AG04450 (cell line): ENCODE measurements at regions of chr7 and their contacts with region 1.

Region 1: DNA sequence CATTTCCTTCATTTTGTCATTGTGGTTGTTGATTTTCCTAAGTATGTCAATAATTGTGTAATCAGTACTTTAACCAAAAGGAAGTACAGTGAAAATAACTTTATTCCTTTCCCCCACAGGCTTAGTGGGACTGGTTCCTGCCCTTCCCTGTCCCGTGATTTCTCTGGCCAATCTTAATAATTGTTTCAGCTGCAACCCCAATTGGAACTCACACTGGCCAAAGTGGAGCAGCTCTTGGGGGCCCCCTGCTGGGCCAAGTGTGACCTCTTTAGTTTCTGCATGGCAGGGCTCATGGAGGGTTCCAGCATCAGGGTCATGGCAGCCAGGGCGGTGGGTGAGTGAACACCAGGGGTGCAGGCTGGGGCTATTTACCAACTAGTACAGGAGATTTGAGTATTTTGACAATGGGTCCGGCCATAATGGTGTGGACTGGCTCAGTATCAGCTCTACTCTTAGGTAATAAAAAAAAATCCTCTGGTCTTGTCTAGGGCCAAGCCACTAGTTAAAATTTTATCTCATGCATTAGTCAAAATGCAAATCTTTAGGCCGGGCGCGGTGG is 31.7 kb downstream of the CYCS start:
- DNase-seq: peak; percentile 30
- H3K4me3 ChIP-seq: no peak overlapping the region
- H3K27ac ChIP-seq: no peak overlapping the region
- H3K27me3 ChIP-seq: no peaks in the 10 kb centered on the region
- CTCF ChIP-seq: peak; percentile 92

Region 2: GRCh38 chr7:24757353-24758275 is 335.7 kb before region 1 on chr7 and contains the start of gene GSDME:
- CTCF ChIA-PET with region 1: interaction called, 19 read pairs
- POLR2A ChIA-PET with region 1: interaction called, 3 read pairs
- DNase-seq: peak; percentile 15
- H3K4me3 ChIP-seq: peak within 1 kb of the TSS; percentile 78
- H3K27ac ChIP-seq: peak within 1 kb of the TSS; percentile 90
- H3K27me3 ChIP-seq: no peaks in the 10 kb centered on the region
- CTCF ChIP-seq: no peak
- polyA plus RNA-seq, gene GSDME: 58.3 and 63.8 TPM in 2 replicates

Region 3: DNA sequence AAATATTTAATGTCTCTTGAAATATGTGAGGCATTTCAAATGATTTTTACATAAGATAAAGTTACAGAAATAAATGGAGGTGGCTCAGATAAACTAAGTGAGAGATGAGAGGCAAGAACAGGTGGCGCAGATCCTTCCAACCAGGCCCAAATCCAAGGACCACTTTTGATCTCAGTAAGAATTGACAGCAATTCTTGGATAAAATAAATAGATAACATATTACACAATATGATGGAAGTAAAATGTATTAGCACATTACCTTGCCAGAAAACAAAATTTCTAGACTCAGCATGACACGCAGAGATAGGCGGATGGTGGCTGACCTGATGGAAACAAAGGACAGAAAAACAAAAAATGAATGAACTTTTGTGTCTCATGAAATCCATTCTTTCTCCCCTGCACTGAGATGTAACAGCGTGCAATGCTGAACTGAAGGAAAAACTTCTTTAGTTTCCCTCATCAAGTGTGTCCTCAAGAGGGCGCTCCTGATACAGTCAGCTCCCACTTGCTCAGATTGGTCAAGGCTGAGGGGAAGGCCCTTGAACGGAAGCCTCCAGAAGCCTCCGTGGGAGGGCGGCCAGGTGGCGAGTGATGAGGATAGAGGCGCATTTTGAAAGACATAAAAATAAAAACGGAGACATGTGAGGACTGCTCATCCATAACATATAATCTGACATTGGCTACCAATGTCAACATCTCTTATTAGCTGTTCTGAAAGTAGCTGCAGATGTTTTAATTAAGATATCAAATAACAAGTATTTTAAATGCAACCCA is 273.2 kb before region 1 on chr7:
- CTCF ChIA-PET with region 1: interaction called, 328 read pairs
- POLR2A ChIA-PET with region 1: interaction called, 3 read pairs
- DNase-seq: peak; percentile 75
- H3K4me3 ChIP-seq: no peak overlapping the region
- H3K27ac ChIP-seq: peak overlapping the region; percentile 35
- H3K27me3 ChIP-seq: no peaks in the 10 kb centered on the region
- CTCF ChIP-seq: peak; percentile 94

Region 4: GRCh38 chr7:24926623-24927524 is 166.5 kb before region 1 on chr7:
- CTCF ChIA-PET with region 1: interaction called, 11 read pairs
- POLR2A ChIA-PET with region 1: no interaction called
- DNase-seq: peak; percentile 53
- H3K4me3 ChIP-seq: no peak overlapping the region
- H3K27ac ChIP-seq: no peak overlapping the region
- H3K27me3 ChIP-seq: no peaks in the 10 kb centered on the region
- CTCF ChIP-seq: no peak

Region 5: DNA sequence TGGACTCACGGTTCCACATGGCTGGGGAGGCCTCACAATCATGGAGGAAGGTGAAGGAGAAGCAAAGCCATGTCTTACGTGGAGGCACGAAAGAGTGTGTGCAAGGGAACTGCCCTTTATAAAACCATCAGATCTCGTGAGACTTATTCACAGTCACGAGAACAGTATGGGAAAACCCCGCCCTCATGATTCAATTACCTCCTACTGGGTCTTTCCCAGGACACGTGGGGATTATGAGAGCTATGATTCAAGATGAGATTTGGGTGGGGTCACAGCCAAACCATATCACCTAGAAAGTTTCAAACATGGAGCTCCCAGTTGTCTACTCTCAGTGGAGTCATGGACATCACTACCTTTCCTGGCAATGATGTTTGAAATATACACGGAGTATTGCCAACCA is 17.9 kb before region 1 on chr7:
- CTCF ChIA-PET with region 1: interaction called, 20 read pairs
- POLR2A ChIA-PET with region 1: no interaction called
- DNase-seq: no peak
- H3K4me3 ChIP-seq: no peak overlapping the region
- H3K27ac ChIP-seq: no peak overlapping the region
- H3K27me3 ChIP-seq: no peaks in the 10 kb centered on the region
- CTCF ChIP-seq: no peak

Region 6: DNA sequence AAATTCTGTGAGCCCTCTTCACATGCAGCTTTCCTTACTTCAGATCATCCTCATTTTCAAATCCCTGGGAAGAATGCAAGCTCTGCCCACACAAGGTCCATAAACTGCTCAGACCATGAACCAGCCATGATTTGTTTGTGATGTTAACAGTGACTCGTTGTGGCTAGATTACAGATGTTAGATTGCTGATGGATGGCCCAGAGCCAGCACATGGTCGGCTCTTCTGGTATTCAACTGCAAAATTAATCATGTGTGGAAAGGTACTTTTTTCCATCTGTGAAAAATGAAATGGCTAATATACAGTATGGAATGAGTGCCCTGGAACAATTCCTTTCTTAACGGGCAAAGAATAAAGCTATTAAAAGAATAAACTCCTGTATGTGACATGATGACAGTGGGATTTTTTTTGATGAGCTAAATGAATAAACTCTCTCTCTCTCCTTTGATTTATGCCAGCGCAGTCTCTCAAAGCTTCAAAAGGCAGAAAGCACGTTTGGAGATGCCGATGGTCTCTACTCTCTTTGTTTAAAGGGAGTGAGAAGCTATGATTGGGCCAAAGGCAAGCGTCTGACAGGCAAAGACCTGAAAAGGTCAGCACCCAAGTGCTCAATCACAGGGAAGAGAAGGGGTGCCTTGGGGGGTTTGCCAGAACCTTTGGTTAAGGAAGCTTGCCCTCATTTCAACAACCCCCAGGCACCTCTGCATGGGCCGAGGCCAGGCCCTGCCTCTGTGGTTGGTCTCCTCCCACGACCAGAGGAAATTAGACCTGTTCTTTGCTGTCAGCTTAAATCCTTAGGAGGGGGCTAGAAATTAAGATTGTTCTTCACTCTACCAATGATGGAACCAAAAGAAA is 614.6 kb after region 1 on chr7:
- CTCF ChIA-PET with region 1: no interaction called
- POLR2A ChIA-PET with region 1: no interaction called
- DNase-seq: no peak
- H3K4me3 ChIP-seq: no peak overlapping the region
- H3K27ac ChIP-seq: no peak overlapping the region
- H3K27me3 ChIP-seq: no peaks in the 10 kb centered on the region
- CTCF ChIP-seq: no peak